ENCODE measurements at regions of chr11 and their contacts with region 1.

Region 1: GRCh38 chr11:18775492-18776292 is 15.9 kb downstream of the PTPN5 start:
- DNase-seq: no peak
- H3K4me3 ChIP-seq: no peak overlapping the region
- CTCF ChIP-seq: peak; percentile 77

Region 2: DNA sequence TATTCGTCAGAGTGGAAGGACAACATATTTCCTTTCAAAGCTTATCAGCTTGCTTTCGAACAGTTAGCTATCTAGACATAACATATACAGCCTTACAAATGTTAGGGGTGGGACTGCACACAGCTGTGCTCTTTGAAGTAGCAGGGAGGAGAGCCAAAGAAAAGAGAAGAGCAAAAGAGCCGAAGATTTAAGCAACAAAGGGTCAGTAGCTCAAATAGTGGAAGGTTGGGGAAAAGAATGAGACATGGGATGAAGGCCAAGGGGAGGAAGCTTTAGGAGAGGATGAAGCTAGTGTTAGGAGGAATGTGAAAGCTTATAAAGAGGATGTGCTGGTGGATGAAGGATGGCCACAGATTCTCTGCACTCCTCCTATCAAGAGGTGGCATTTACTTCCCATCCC is 17.9 kb before region 1 on chr11:
- CTCF ChIA-PET with region 1: interaction called, 67 read pairs
- POLR2A ChIA-PET with region 1: no interaction called
- DNase-seq: no peak
- H3K4me3 ChIP-seq: no peak overlapping the region
- CTCF ChIP-seq: no peak

Region 3: DNA sequence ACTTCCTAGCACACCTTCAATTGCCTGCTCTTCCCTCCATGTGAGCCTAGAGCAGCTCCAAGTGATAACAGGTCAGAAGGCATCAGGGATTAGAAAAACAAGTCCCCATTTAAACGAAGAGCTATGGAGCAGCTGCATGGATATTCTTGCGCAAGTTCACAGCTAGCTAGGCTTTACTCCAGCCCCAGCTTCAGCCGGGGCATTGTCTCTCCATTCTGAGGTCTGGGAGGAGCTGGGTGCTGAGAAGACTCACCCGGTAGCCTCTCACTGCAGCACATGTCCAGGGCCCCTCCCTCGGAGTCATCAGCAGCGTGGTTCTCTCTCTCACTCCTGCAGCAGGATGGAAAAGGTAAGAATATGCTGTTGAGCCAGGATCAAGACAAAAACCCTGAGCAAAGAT is 10.1 kb before region 1 on chr11:
- CTCF ChIA-PET with region 1: interaction called, 67 read pairs
- POLR2A ChIA-PET with region 1: no interaction called
- DNase-seq: no peak
- H3K4me3 ChIP-seq: no peak overlapping the region
- CTCF ChIP-seq: no peak

Region 4: GRCh38 chr11:18802381-18803257 is 26.9 kb after region 1 on chr11:
- CTCF ChIA-PET with region 1: interaction called, 16 read pairs
- POLR2A ChIA-PET with region 1: no interaction called
- DNase-seq: peak; percentile 34
- H3K4me3 ChIP-seq: no peak overlapping the region
- CTCF ChIP-seq: peak; percentile 47

Region 5: DNA sequence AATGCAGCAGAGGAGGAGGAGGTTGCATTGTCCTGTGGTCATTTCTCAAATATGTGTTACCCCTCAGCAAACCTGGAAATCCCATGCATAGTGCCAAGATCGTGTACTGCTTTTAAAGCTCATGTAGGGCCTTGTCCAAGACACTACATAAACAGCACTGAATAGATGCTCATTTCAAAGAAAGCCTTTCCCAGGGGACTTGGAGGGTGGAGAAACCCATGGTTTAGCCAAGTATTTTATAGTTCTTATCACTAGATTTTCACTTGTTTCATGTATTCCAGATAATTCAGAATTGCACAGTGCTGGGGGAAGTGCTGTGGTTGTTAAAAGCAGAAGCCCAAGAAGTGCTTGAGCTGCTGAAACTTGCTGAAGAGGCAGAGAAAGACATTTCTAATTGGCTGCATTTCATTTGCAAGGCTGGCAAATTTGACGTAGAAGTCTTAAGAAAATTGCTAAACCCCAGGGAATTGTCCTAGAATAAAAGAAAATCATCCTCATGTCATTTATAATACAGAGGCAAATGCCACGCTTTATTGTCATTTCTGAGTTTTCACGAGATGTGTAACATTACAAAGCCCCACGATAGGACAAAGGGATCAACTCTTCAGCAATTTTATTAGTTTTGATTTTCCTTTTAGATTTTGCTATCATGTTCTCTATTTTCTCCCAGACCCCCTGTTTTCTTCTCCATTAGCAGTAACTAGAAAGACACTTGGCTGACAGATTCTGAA is 406.0 kb after region 1 on chr11:
- CTCF ChIA-PET with region 1: no interaction called
- POLR2A ChIA-PET with region 1: no interaction called
- DNase-seq: no peak
- H3K4me3 ChIP-seq: no peak overlapping the region
- CTCF ChIP-seq: no peak

Measured in AG04449 (cell line).